ENCODE measurements at regions of chr10 and their contacts with region 1.

Region 1: GRCh38 chr10:14837757-14838581 is at the starts of genes CDNF, HSPA14 and MSANTD7:
- ATAC-seq: peak; percentile 87 to 95 (median 94)
- H3K4me3 ChIP-seq: peak within 1 kb of the TSS; percentile 62 to 92 (median 80)
- H3K27ac ChIP-seq: peak within 1 kb of the TSS; percentile 92 to 94
- H3K4me1 ChIP-seq: peaks cover 6 to 18% of the 10 kb centered on the region in 2 donors
- total RNA-seq, gene CDNF: 0.81 to 3.6 (median 1.1) TPM
- total RNA-seq, gene HSPA14: 9.3 to 28.7 (median 14.5) TPM
- total RNA-seq, gene MSANTD7: 17.4 to 26.4 (median 19.4) TPM

Region 2: GRCh38 chr10:14507176-14507575 is 330.8 kb before region 1 on chr10:
- in situ Hi-C with region 1: loop called in 1 of 9 experiments (anchors 25 kb)
- ATAC-seq: no peak
- H3K4me3 ChIP-seq: no peak overlapping the region
- H3K27ac ChIP-seq: no peak overlapping the region
- H3K4me1 ChIP-seq: peaks cover 5% of the 10 kb centered on the region in 2 donors

Region 3: GRCh38 chr10:14536241-14537213 is 301.4 kb before region 1 on chr10:
- in situ Hi-C with region 1: loop called in 1 of 9 experiments (anchors 25 kb)
- ATAC-seq: peak; percentile 67 to 95 (median 85)
- H3K4me3 ChIP-seq: no peak overlapping the region
- H3K27ac ChIP-seq: no peak overlapping the region
- H3K4me1 ChIP-seq: peaks cover 4 to 12% of the 10 kb centered on the region in 2 donors

Region 4: DNA sequence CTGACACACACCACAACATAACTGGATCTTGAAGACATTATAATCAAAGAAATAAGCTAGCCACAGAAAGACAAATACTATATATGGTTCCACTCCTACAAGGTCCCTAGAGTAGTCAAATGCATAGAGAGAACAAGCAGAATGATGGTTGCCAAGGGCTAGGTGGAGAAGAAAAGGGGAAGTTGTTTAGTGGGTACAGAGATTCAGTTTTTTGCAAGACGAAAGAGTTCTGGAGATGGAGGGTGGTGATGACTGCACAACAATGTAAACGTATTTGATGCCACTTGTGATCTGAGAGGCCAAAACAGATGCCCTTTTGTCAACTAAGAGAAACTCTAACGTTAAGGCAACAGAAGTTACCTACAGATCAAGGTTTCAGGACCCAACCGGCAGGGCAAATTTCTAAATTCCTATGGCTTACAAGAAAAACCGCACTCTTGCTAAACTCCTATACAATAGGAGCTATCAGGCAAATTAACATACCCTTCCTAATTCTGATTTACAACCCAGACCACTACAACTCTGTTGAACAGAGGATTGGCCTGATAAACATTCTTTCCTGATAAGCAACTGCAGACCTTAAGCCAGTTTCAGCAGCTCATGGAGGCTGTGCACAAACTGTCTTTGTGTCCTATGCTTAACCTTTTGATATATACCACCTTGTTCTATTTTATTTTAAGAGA is 132.3 kb before region 1 on chr10:
- in situ Hi-C with region 1: no loop called
- ATAC-seq: no peak
- H3K4me3 ChIP-seq: no peak overlapping the region
- H3K27ac ChIP-seq: no peak overlapping the region
- H3K4me1 ChIP-seq: peaks cover 0 to 2% of the 10 kb centered on the region in 2 donors